Naive thymus-derived CD4-positive, alpha-beta T cell (primary cell): ENCODE measurements at regions of chrX and their contacts with region 1.

Region 1: DNA sequence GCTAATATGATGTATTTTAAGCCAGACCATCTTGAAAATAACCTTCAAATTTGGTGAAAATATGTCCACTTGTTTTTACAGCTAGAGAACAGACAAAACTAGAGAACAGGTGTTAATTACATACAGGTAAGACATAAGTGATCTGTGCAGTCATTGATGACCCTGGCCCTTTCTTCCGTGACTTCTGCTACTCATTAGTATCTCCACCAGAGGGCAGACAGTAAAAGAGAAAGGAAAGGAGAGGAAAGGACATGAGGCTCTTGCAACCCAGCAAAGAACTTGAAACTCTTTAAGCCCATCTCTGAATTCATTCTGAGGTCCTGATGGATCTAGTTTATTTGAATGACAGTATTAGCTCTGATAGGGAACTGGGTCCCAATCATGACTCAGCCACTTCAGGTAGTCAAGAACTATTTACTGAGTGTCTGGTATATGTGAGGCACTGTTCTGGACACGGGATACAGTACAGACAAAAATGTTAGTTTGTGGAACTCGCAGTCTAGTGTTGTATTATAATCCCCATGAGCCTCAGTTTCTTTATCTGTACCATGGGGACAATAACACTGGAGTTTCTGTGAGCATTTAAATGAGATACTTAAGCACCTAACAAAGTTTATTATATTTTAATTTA is 121.0 kb upstream of the TEX13D start:
- DNase-seq: peak in 7 of 9 donors; percentile 27 to 63 (median 51)
- ATAC-seq: peak; percentile 83
- H3K4me3 ChIP-seq: no peak overlapping the region
- H3K4me3 Mint-ChIP-seq: no peak overlapping the region
- H3K27ac ChIP-seq: no peak overlapping the region
- H3K27ac Mint-ChIP-seq: peak overlapping the region in 1 of 9 donors; percentile 21
- H3K4me1 ChIP-seq: peaks cover 20 to 31% of the 10 kb centered on the region in 2 donors
- H3K4me1 Mint-ChIP-seq: peaks cover 19 to 51% (median 45%) of the 10 kb centered on the region in 7 donors
- H3K27me3 ChIP-seq: no peaks in the 10 kb centered on the region
- H3K27me3 Mint-ChIP-seq: peaks cover 0 to 3% (median 0%) of the 10 kb centered on the region in 5 donors

Region 2: DNA sequence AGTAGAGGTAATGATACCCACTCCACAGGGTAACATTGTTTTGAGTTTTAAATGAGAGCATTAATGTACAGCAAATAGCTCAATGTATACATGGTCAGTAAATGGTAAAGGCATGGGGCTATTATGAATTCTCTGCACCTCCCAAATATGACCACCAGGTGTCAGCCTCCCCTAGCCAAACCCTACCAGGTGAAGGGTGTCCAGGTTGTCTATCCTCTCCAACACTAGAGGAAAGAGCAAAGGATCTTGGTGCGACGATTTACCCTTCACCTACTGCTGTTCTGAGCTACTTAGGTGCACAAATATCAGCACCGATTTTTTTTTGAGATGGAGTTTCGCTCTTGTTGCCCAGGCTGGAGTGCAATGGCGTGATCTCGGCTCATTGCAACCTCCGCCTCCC is 378.0 kb before region 1 on chrX:
- CTCF ChIA-PET with region 1: no interaction called
- POLR2A ChIA-PET with region 1: no interaction called
- intact Hi-C with region 1: loop called in 1 of 2 experiments (anchors 1 kb)
- DNase-seq: peak; percentile 18 to 61 (median 52)
- ATAC-seq: peak; percentile 95
- H3K4me3 ChIP-seq: no peak overlapping the region
- H3K4me3 Mint-ChIP-seq: no peak overlapping the region
- H3K27ac ChIP-seq: no peak overlapping the region
- H3K27ac Mint-ChIP-seq: no peak overlapping the region
- H3K4me1 ChIP-seq: no peaks in the 10 kb centered on the region
- H3K4me1 Mint-ChIP-seq: no peaks in the 10 kb centered on the region
- H3K27me3 ChIP-seq: no peaks in the 10 kb centered on the region
- H3K27me3 Mint-ChIP-seq: peaks cover 0 to 5% (median 0%) of the 10 kb centered on the region in 5 donors

Region 3: GRCh38 chrX:123899701-123900100 is 311.7 kb before region 1 on chrX:
- CTCF ChIA-PET with region 1: no interaction called
- POLR2A ChIA-PET with region 1: no interaction called
- intact Hi-C with region 1: no loop called
- DNase-seq: no peak
- ATAC-seq: no peak
- H3K4me3 ChIP-seq: no peak overlapping the region
- H3K4me3 Mint-ChIP-seq: no peak overlapping the region
- H3K27ac ChIP-seq: no peak overlapping the region
- H3K27ac Mint-ChIP-seq: no peak overlapping the region
- H3K4me1 ChIP-seq: no peaks in the 10 kb centered on the region
- H3K4me1 Mint-ChIP-seq: peaks cover 0 to 7% (median 0%) of the 10 kb centered on the region in 7 donors
- H3K27me3 ChIP-seq: no peaks in the 10 kb centered on the region
- H3K27me3 Mint-ChIP-seq: no peaks in the 10 kb centered on the region

Region 4: DNA sequence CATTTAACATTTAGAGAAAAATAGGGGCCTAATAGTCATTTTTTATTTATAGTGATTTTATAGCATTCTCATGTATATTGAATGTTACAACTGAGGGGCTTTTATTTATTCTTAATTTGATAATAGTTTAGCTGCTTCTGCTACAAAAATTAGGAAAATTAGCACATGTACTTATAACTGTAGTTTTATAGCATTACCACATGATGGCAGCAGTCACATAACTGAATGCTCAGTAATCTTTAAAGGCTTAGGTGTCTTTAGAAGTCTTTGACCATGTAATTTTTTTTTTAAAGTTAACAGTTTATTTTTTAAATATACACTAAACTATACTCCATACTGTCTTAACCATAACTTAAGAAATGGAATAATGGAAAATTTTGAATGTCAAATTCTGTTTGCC is 113.3 kb before region 1 on chrX:
- CTCF ChIA-PET with region 1: interaction called, 4 read pairs
- POLR2A ChIA-PET with region 1: no interaction called
- intact Hi-C with region 1: loop called in 1 of 2 experiments (anchors 10 kb)
- DNase-seq: peak in 5 of 9 donors; percentile 8 to 34 (median 30)
- ATAC-seq: peak; percentile 55
- H3K4me3 ChIP-seq: no peak overlapping the region
- H3K4me3 Mint-ChIP-seq: no peak overlapping the region
- H3K27ac ChIP-seq: no peak overlapping the region
- H3K27ac Mint-ChIP-seq: no peak overlapping the region
- H3K4me1 ChIP-seq: no peaks in the 10 kb centered on the region
- H3K4me1 Mint-ChIP-seq: peaks cover 0 to 2% (median 0%) of the 10 kb centered on the region in 7 donors
- H3K27me3 ChIP-seq: no peaks in the 10 kb centered on the region
- H3K27me3 Mint-ChIP-seq: no peaks in the 10 kb centered on the region

Region 5: GRCh38 chrX:124338733-124339514 is 127.5 kb after region 1 on chrX:
- CTCF ChIA-PET with region 1: interaction called, 3 read pairs
- POLR2A ChIA-PET with region 1: interaction called, 10 read pairs
- intact Hi-C with region 1: loop called in 1 of 2 experiments (anchors 2 kb)
- DNase-seq: peak in 7 of 9 donors; percentile 34 to 70 (median 49)
- ATAC-seq: peak; percentile 86
- H3K4me3 ChIP-seq: no peak overlapping the region
- H3K4me3 Mint-ChIP-seq: peak overlapping the region in 2 of 10 donors; percentile 6 to 27
- H3K27ac ChIP-seq: no peak overlapping the region
- H3K27ac Mint-ChIP-seq: peak overlapping the region in 8 of 9 donors; percentile 54 to 88 (median 78)
- H3K4me1 ChIP-seq: peaks cover 38 to 51% of the 10 kb centered on the region in 2 donors
- H3K4me1 Mint-ChIP-seq: peaks cover 8 to 58% (median 42%) of the 10 kb centered on the region in 7 donors
- H3K27me3 ChIP-seq: no peaks in the 10 kb centered on the region
- H3K27me3 Mint-ChIP-seq: no peaks in the 10 kb centered on the region

Region 6: DNA sequence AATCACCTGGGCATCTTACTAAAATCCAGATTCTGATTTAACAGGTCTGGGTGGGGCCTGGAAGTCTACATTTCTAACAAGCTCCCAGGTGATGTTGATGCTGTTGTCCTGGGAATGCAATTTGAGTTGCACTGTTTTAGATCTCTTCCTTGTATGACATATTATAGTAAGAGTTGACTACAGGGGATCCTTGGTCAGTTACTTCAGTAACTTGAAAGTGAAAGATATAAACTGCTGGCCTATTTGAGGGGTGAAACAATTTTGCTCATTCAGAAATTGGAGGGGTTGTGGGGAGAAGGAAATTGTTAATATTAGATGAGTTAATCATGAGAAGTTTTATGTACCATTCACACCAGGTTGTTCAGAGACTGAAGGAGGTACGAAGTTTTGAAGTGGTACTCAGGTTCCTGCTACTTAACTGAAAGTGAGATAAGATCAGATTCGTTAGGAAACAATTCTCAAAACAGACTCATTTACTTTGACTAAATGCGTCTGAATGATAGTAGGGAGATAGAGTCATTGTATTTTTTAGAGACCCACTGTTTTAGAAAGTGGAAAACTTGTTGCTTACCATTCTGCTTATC is 147.5 kb after region 1 on chrX:
- CTCF ChIA-PET with region 1: interaction called, 10 read pairs
- POLR2A ChIA-PET with region 1: no interaction called
- intact Hi-C with region 1: no loop called
- DNase-seq: peak in 6 of 9 donors; percentile 27 to 56 (median 36)
- ATAC-seq: peak; percentile 71
- H3K4me3 ChIP-seq: peak overlapping the region; percentile 43
- H3K4me3 Mint-ChIP-seq: peak overlapping the region; percentile 12 to 84 (median 58)
- H3K27ac ChIP-seq: peak overlapping the region; percentile 37
- H3K27ac Mint-ChIP-seq: peak overlapping the region; percentile 21 to 92 (median 70)
- H3K4me1 ChIP-seq: peaks cover 19 to 25% of the 10 kb centered on the region in 2 donors
- H3K4me1 Mint-ChIP-seq: peaks cover 29 to 66% (median 64%) of the 10 kb centered on the region in 7 donors
- H3K27me3 ChIP-seq: no peaks in the 10 kb centered on the region
- H3K27me3 Mint-ChIP-seq: no peaks in the 10 kb centered on the region

Region 7: DNA sequence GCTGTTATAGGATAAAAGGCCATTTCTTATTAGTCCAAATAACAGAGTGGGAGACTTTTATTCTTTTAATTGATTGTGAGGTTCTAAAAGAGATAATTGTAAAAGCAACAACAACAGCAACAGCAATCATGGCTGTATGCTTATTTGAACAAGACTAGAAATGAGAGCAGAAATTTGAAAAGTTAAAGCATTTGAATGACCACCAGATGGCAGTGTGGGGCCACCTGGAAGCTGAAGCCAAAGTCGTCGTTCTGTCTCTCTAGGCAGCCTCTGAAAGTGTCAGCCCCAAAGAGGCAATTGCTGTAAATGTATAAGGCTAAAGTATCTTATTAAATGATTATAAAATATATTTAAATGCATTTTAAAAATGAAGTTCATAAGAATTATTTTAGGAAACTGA is 177.1 kb after region 1 on chrX:
- CTCF ChIA-PET with region 1: interaction called, 3 read pairs
- POLR2A ChIA-PET with region 1: no interaction called
- intact Hi-C with region 1: loop called in 1 of 2 experiments (anchors 1 kb)
- DNase-seq: peak in 8 of 9 donors; percentile 7 to 68 (median 53)
- ATAC-seq: peak; percentile 76
- H3K4me3 ChIP-seq: no peak overlapping the region
- H3K4me3 Mint-ChIP-seq: no peak overlapping the region
- H3K27ac ChIP-seq: no peak overlapping the region
- H3K27ac Mint-ChIP-seq: peak overlapping the region in 2 of 9 donors; percentile 32 to 62
- H3K4me1 ChIP-seq: no peaks in the 10 kb centered on the region
- H3K4me1 Mint-ChIP-seq: peaks cover 1 to 30% (median 19%) of the 10 kb centered on the region in 7 donors
- H3K27me3 ChIP-seq: no peaks in the 10 kb centered on the region
- H3K27me3 Mint-ChIP-seq: no peaks in the 10 kb centered on the region